Sigmoid colon (tissue), 7 donors: ENCODE measurements at regions of chr18 and their contacts with region 1.

Region 1: GRCh38 chr18:48868468-48869466 is 82.0 kb downstream of the SMAD7 start:
- DNase-seq: no peak
- H3K4me3 ChIP-seq: no peak overlapping the region
- H3K27ac ChIP-seq: no peak overlapping the region
- H3K4me1 ChIP-seq: peaks cover 0 to 20% (median 13%) of the 10 kb centered on the region in 4 donors
- H3K27me3 ChIP-seq: no peaks in the 10 kb centered on the region
- CTCF ChIP-seq: no peak
- EP300 ChIP-seq: no peak
- POLR2A ChIP-seq: no peak

Region 2: DNA sequence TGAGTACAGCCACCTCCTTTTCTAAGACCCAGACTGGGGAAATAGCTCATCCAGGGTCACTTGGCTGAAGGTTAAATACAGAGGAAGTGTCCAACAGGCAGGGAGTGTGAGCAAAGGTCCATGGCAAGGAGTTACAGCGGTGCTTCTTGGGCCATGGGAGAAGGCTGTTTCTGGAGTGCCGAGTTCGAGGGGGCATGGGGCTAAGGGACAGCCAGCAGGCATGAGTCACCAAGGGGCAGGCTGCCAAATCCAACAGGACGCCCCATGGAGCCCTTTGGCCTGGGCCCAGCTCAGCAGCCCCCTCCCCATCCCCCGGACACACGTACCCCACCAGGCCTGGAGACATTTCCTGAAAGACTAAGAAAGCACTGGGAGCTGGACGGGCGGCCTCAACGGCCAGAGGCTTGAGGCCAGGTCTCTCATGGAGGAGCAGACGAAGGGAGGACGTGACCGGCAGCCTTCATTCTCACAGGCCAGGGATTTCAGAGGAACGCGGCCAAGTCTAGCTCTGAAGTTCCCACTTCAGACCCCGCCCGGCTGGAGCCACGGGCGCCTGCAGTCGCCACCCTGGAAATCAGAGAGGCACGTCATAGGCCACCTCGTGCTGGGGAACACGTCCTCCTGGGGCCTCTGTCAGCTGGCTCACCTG is 78.4 kb before region 1 on chr18:
- intact Hi-C with region 1: no loop called
- DNase-seq: peak; percentile 76
- H3K4me3 ChIP-seq: no peak overlapping the region
- H3K27ac ChIP-seq: peak overlapping the region; percentile 9 to 44 (median 28)
- H3K4me1 ChIP-seq: peaks cover 0 to 26% (median 7%) of the 10 kb centered on the region in 4 donors
- H3K27me3 ChIP-seq: no peaks in the 10 kb centered on the region
- CTCF ChIP-seq: no peak
- EP300 ChIP-seq: no peak
- POLR2A ChIP-seq: no peak

Region 3: GRCh38 chr18:48940854-48941611 is 72.3 kb after region 1 on chr18:
- intact Hi-C with region 1: loop called (anchors 5 kb)
- DNase-seq: no peak
- H3K4me3 ChIP-seq: no peak overlapping the region
- H3K27ac ChIP-seq: peak overlapping the region; percentile 93 to 99 (median 97)
- H3K4me1 ChIP-seq: peaks cover 0 to 99% (median 94%) of the 10 kb centered on the region in 4 donors
- H3K27me3 ChIP-seq: no peaks in the 10 kb centered on the region
- CTCF ChIP-seq: no peak
- EP300 ChIP-seq: no peak
- POLR2A ChIP-seq: no peak

Region 4: DNA sequence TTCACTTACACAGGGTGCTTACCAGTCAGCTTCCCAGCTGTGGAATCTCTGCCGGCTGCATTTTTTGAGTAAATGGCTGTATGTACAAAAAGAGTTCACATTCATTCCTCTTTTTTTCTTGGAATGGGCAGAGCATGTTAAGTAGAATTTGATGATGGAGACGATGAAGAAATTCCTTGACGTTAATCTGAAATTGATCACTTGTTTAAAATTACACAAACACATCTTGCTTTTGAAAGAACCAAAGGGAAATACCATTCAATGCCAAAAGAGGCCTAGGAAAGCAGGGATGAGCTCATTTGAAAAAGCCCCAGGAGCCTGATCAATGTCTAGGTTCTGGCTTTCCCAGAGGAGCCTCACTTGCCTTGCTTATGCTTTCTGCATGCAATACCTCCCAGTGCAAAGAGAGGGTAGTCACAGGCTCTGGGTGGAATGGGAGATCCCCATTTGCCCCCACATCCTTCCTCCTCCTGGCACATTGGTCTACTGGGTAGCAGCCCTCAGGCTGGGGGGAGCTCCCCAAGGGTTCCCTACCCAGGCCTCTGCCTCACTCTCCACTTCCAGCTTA is 94.3 kb after region 1 on chr18:
- intact Hi-C with region 1: no loop called
- DNase-seq: no peak
- H3K4me3 ChIP-seq: no peak overlapping the region
- H3K27ac ChIP-seq: peak overlapping the region; percentile 16 to 72 (median 36)
- H3K4me1 ChIP-seq: peaks cover 0 to 21% (median 10%) of the 10 kb centered on the region in 4 donors
- H3K27me3 ChIP-seq: no peaks in the 10 kb centered on the region
- CTCF ChIP-seq: no peak
- EP300 ChIP-seq: no peak
- POLR2A ChIP-seq: no peak